ENCODE measurements at regions of chr15 and their contacts with region 1.

Region 1: GRCh38 chr15:58770857-58771620 is at the start of gene MINDY2:
- DNase-seq: peak; percentile 90
- H3K4me3 ChIP-seq: peak within 1 kb of the TSS; percentile 82
- CTCF ChIP-seq: peak; percentile 51

Region 2: DNA sequence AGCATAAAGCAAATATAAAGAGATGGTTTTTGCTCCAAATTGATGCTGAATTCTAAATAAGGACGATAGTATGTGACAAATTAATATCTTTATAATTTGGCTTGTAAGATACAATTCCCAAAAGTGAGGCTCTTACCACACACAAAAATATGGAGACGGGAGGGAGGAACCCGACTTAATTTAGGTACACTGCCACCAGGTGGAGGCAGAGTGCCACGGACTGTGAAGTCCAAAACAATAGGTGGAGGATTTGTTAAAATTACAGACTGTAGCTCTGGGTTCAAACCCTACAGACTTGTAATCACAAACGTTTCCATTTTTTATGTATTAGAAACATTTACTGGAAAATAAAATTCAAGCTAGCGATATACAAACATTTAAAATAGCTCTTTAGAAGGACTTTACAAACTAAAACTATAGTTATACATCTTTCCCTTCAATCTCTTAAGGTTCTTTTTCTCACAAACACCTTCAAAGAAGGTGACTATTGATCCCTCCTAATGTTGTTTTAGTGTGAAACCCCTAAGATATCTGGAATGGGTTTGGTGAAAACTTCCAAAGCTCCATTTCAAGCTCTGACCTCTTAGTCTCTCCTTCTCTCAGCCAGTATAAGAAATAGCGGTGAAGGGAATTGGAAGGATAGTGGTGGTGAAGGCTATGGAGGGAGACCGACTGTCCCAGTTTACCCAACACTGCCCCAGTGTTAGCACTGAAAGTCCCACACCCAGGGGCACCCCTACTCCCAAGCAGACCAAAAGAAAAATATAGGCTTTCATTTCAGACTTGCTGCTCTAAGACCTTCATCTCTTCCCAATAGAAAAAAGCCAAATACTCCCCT is 543.1 kb before region 1 on chr15:
- CTCF ChIA-PET with region 1: interaction called, 13 read pairs
- POLR2A ChIA-PET with region 1: interaction called, 9 read pairs
- DNase-seq: peak; percentile 31
- H3K4me3 ChIP-seq: no peak overlapping the region
- CTCF ChIP-seq: peak; percentile 74

Region 3: GRCh38 chr15:58331903-58332675 is 438.9 kb before region 1 on chr15:
- CTCF ChIA-PET with region 1: no interaction called
- POLR2A ChIA-PET with region 1: interaction called, 11 read pairs
- DNase-seq: peak; percentile 95
- H3K4me3 ChIP-seq: no peak overlapping the region
- CTCF ChIP-seq: no peak

Region 4: GRCh38 chr15:58749532-58750337 is 21.3 kb before region 1 on chr15 and contains the start of gene ADAM10:
- CTCF ChIA-PET with region 1: interaction called, 8 read pairs
- POLR2A ChIA-PET with region 1: interaction called, 44 read pairs
- DNase-seq: peak; percentile 84
- H3K4me3 ChIP-seq: peak within 1 kb of the TSS; percentile 82
- CTCF ChIP-seq: no peak